ENCODE measurements at regions of chr1 and their contacts with region 1.

Region 1: GRCh38 chr1:36576118-36576517 is 93.4 kb upstream of the CSF3R start:
- DNase-seq: no peak
- ATAC-seq: peak; percentile 93
- H3K4me3 ChIP-seq: no peak overlapping the region
- H3K27ac ChIP-seq: no peak overlapping the region
- H3K4me1 ChIP-seq: no peaks in the 10 kb centered on the region
- H3K27me3 ChIP-seq: no peaks in the 10 kb centered on the region; the same call in 1 of the 2 replicates
- CTCF ChIP-seq: peak; percentile 96

Region 2: GRCh38 chr1:37237948-37238347 is 661.8 kb after region 1 on chr1:
- CTCF ChIA-PET with region 1: interaction called, 15 read pairs
- POLR2A ChIA-PET with region 1: no interaction called
- in situ Hi-C with region 1: no loop called
- intact Hi-C with region 1: no loop called
- DNase-seq: no peak
- ATAC-seq: no peak
- H3K4me3 ChIP-seq: no peak overlapping the region
- H3K27ac ChIP-seq: no peak overlapping the region
- H3K4me1 ChIP-seq: no peaks in the 10 kb centered on the region
- H3K27me3 ChIP-seq: peaks cover 2% of the 10 kb centered on the region; the same call in 1 of the 2 replicates
- CTCF ChIP-seq: no peak